ENCODE measurements at regions of chr13 and their contacts with region 1.

Region 1: DNA sequence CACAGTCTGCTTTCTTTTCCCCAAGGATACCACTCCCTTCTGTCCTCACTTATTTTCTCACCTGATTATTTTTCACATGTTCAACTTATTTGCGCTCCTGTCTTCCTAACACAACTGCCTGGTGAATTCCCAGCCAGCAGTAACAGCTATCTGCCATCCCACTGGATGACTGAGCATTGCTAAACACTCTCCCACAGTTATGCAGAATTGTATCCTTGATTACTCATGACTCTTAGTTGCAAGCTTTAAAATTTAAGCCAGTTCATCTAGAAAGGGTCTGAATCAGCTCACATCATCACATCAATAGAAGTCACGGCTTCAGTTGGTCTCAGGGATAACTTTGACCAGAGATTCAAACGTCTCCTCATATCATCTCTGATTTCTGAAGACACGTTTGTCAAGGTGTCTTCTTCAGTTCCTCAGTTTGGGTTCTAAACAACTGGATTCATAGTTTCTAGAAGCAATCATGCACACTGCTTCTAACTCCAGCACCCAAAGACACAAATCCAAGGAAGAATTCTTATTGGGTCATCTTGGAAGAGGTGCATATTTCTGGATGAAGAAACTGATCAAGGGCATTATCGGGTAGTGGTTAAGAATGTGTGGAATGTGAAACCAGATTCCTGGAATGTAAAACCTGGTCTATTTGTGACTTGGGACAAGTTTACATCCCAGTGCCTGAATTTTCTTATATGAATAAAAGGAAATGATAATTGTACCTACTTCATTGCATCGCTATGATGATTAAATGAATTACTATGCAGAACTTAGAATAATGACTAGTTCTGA is 13.9 kb upstream of the DACH1 start:
- DNase-seq: no peak
- H3K4me3 ChIP-seq: no peak overlapping the region
- H3K27ac ChIP-seq: no peak overlapping the region
- H3K4me1 ChIP-seq: peaks cover 0 to 14% (median 4%) of the 10 kb centered on the region in 6 donors
- H3K27me3 ChIP-seq: no peaks in the 10 kb centered on the region
- CTCF ChIP-seq: no peak
- POLR2A ChIP-seq: no peak

Region 2: DNA sequence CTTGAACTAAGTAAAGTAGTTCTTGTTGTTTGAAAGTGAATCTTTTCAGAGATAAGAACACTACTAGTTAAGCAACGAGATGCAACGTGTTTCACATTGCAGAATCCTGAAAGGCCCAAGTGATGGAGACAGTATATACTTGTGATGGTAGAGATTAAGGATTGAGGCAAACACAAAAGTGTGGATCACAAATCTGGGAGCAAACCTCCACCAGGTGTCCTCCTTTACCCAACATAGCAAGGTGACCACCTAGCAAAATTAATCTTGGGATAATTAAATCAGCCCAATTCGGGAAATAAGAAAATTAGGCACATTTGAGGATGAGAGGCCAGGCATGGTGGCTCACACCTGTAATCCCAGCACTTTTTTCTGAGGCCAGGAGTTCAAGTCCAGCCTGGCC is 577.8 kb before region 1 on chr13:
- intact Hi-C with region 1: loop called (anchors 5 kb)
- DNase-seq: no peak
- H3K4me3 ChIP-seq: no peak overlapping the region
- H3K27ac ChIP-seq: no peak overlapping the region
- H3K4me1 ChIP-seq: no peaks in the 10 kb centered on the region
- H3K27me3 ChIP-seq: no peaks in the 10 kb centered on the region
- CTCF ChIP-seq: peak in 1 of 11 experiments; percentile 17
- POLR2A ChIP-seq: no peak

Measured in spleen (tissue), 13 donors.